CD4-positive, alpha-beta memory T cell (primary cell): ENCODE measurements at regions of chr3 and their contacts with region 1.

Region 1: GRCh38 chr3:113844622-113845222 is 6.1 kb downstream of the GRAMD1C start:
- DNase-seq: peak in 4 of 5 donors; percentile 6 to 18 (median 14)
- H3K4me3 ChIP-seq: no peak overlapping the region
- H3K4me3 Mint-ChIP-seq: no peak overlapping the region
- H3K27ac ChIP-seq: no peak overlapping the region
- H3K27ac Mint-ChIP-seq: no peak overlapping the region
- H3K4me1 ChIP-seq: no peaks in the 10 kb centered on the region
- H3K4me1 Mint-ChIP-seq: peaks cover 0 to 3% (median 0%) of the 10 kb centered on the region in 4 donors
- H3K27me3 ChIP-seq: no peaks in the 10 kb centered on the region
- H3K27me3 Mint-ChIP-seq: peaks cover 0 to 1% of the 10 kb centered on the region in 2 donors

Region 2: GRCh38 chr3:113736548-113737089 is 108.1 kb before region 1 on chr3:
- CTCF ChIA-PET with region 1: interaction called, 27 read pairs
- POLR2A ChIA-PET with region 1: no interaction called
- intact Hi-C with region 1: no loop called
- DNase-seq: peak; percentile 47 to 72 (median 71)
- H3K4me3 ChIP-seq: no peak overlapping the region
- H3K4me3 Mint-ChIP-seq: peak overlapping the region in 1 of 8 donors; percentile 15
- H3K27ac ChIP-seq: peak overlapping the region; percentile 32
- H3K27ac Mint-ChIP-seq: peak overlapping the region; percentile 48 to 88 (median 77)
- H3K4me1 ChIP-seq: peaks cover 32% of the 10 kb centered on the region
- H3K4me1 Mint-ChIP-seq: peaks cover 35 to 61% (median 42%) of the 10 kb centered on the region in 4 donors
- H3K27me3 ChIP-seq: no peaks in the 10 kb centered on the region
- H3K27me3 Mint-ChIP-seq: no peaks in the 10 kb centered on the region

Region 3: DNA sequence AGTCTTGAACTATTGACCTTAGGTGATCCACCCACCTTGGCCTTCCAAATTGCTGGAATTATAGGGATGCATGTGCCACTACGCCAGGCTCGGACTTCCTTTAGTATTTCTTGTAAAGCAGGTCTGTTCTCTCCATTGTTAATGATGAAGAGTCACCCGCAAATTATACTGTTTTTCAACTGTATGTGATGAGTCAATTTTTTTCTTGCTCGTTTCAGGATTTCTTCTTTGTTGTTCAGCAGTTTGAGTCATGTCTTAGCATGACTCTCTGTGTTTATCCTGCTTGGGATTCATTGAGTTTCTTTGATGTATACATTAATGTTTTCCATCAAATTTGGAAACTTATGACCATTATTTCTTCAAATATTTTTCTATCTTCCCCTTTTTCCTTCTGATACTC is 22.8 kb after region 1 on chr3:
- CTCF ChIA-PET with region 1: no interaction called
- POLR2A ChIA-PET with region 1: no interaction called
- intact Hi-C with region 1: no loop called
- DNase-seq: no peak
- H3K4me3 ChIP-seq: no peak overlapping the region
- H3K4me3 Mint-ChIP-seq: no peak overlapping the region
- H3K27ac ChIP-seq: no peak overlapping the region
- H3K27ac Mint-ChIP-seq: no peak overlapping the region
- H3K4me1 ChIP-seq: no peaks in the 10 kb centered on the region
- H3K4me1 Mint-ChIP-seq: no peaks in the 10 kb centered on the region
- H3K27me3 ChIP-seq: no peaks in the 10 kb centered on the region
- H3K27me3 Mint-ChIP-seq: peaks cover 2 to 3% of the 10 kb centered on the region in 2 donors

Region 4: DNA sequence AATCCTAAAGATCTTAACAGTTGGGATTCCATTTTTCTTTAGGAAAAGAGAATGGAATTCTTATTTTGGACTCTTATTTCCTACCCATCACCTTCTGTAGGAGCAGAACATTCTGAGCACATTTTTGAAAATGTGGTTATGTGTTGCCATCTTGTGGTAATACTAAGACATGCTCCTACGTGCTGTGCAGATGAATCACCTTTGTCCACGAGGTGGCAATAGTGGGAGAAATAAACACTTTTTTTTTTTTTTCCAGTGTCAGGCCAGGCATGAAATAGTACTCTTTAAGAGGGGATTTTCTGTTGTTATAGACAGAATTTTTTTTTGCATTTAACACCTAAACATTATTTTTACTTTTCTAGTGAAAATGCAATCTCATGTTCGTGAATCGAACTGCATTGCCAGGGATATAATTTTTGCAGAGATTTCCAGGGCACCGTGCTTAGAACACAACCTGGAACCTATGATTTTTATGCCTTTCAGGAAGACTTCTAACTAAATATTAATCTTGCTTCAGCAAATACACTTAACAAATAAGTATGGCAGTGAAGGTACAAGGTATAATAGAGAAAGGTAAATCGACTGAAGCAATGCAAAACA is 1975.2 kb after region 1 on chr3:
- CTCF ChIA-PET with region 1: no interaction called
- POLR2A ChIA-PET with region 1: no interaction called
- intact Hi-C with region 1: loop called (anchors 10 kb)
- DNase-seq: peak; percentile 63 to 70 (median 65)
- H3K4me3 ChIP-seq: no peak overlapping the region
- H3K4me3 Mint-ChIP-seq: no peak overlapping the region
- H3K27ac ChIP-seq: no peak overlapping the region
- H3K27ac Mint-ChIP-seq: no peak overlapping the region
- H3K4me1 ChIP-seq: no peaks in the 10 kb centered on the region
- H3K4me1 Mint-ChIP-seq: no peaks in the 10 kb centered on the region
- H3K27me3 ChIP-seq: no peaks in the 10 kb centered on the region
- H3K27me3 Mint-ChIP-seq: peaks cover 0 to 2% of the 10 kb centered on the region in 2 donors